Natural killer cell (primary cell): ENCODE measurements at regions of chr14 and their contacts with region 1.

Region 1: GRCh38 chr14:105732748-105733622 is 206.6 kb downstream of the TMEM121 start:
- DNase-seq: no peak
- ATAC-seq: peak in 2 of 3 donors; percentile 10 to 37
- H3K4me3 ChIP-seq: no peak overlapping the region
- H3K4me3 Mint-ChIP-seq: no peak overlapping the region
- H3K27ac ChIP-seq: no peak overlapping the region
- H3K27ac Mint-ChIP-seq: no peak overlapping the region
- H3K4me1 ChIP-seq: no peaks in the 10 kb centered on the region
- H3K4me1 Mint-ChIP-seq: peaks cover 0 to 5% of the 10 kb centered on the region in 2 donors
- H3K27me3 ChIP-seq: no peaks in the 10 kb centered on the region
- H3K27me3 Mint-ChIP-seq: peaks cover 3 to 11% of the 10 kb centered on the region in 2 donors
- CTCF ChIP-seq: no peak

Region 2: GRCh38 chr14:105617201-105617777 is 115.7 kb before region 1 on chr14:
- intact Hi-C with region 1: loop called (anchors 5 kb)
- DNase-seq: no peak
- ATAC-seq: peak in 2 of 3 donors; percentile 40 to 58
- H3K4me3 ChIP-seq: no peak overlapping the region
- H3K4me3 Mint-ChIP-seq: no peak overlapping the region
- H3K27ac ChIP-seq: no peak overlapping the region
- H3K27ac Mint-ChIP-seq: peak overlapping the region in 1 of 2 donors; percentile 33
- H3K4me1 ChIP-seq: no peaks in the 10 kb centered on the region
- H3K4me1 Mint-ChIP-seq: no peaks in the 10 kb centered on the region
- H3K27me3 ChIP-seq: no peaks in the 10 kb centered on the region
- H3K27me3 Mint-ChIP-seq: peaks cover 0 to 6% of the 10 kb centered on the region in 2 donors
- CTCF ChIP-seq: no peak

Region 3: DNA sequence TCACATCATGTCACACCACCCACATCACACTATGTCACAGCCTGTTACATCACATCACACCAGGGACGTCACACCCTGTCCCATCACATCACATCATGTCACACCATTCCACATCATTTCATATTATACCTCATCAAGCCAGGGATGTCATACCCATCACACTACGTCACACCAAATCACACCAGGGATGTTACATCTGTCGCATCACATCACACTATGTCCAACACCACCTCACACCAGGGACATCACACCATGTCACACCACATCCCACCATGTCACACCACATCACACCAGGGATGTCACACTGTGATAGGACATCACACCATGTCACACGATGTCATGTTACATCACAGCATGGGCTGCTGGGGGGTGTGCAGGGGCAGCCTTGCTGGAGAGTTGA is 96.0 kb before region 1 on chr14:
- intact Hi-C with region 1: loop called (anchors 5 kb)
- DNase-seq: no peak
- ATAC-seq: no peak
- H3K4me3 ChIP-seq: no peak overlapping the region
- H3K4me3 Mint-ChIP-seq: no peak overlapping the region
- H3K27ac ChIP-seq: no peak overlapping the region
- H3K27ac Mint-ChIP-seq: no peak overlapping the region
- H3K4me1 ChIP-seq: no peaks in the 10 kb centered on the region
- H3K4me1 Mint-ChIP-seq: no peaks in the 10 kb centered on the region
- H3K27me3 ChIP-seq: no peaks in the 10 kb centered on the region
- H3K27me3 Mint-ChIP-seq: peaks cover 0 to 6% of the 10 kb centered on the region in 2 donors
- CTCF ChIP-seq: no peak